Activated naive CD4-positive, alpha-beta T cell treated with anti-CD3 and anti-CD28 coated beads, Interleukin-2, amount 10 ng/mL, durations not matched to agents 7 days and 5 days (primary cell): ENCODE measurements at regions of chr10 and their contacts with region 1.

Region 1: DNA sequence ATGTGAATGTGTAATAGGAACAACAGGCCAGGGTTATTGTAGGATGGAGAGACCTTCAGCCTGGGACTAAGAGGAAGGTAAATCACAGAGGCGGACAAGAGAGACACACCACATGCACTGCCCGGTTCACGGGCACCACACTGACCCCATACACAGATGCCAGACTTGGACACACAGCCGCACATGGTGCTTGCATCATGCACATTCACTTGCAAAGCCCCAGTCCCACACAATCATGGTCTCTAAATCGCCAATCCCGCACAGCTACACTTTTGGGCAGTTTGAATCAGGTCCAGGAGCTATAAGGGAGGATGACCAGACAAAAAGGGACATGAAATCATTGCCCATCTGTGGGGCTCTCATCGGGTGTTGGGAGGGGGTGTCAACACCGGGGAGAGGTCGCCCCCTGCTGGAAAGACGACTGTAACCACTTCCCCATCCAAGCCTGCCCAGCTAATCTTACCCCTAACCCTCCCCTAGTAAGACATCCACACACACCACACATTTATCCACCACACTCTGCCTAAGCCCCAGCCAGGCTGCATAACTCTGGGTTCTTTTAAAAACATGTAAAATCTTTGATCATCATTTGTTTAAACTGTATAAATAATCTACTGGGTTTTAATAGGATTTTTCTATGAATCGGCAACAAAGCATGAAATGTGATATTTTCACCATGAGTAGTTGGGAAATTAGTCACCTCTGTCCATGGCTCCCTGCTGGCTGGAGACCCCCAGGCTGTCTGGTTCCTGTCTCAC is 40.5 kb upstream of the SLF2 start:
- DNase-seq: peak; percentile 72
- H3K4me3 Mint-ChIP-seq: no peak overlapping the region
- H3K27ac Mint-ChIP-seq: no peak overlapping the region
- H3K4me1 Mint-ChIP-seq: no peaks in the 10 kb centered on the region
- H3K27me3 Mint-ChIP-seq: peaks cover 41% of the 10 kb centered on the region

Region 2: DNA sequence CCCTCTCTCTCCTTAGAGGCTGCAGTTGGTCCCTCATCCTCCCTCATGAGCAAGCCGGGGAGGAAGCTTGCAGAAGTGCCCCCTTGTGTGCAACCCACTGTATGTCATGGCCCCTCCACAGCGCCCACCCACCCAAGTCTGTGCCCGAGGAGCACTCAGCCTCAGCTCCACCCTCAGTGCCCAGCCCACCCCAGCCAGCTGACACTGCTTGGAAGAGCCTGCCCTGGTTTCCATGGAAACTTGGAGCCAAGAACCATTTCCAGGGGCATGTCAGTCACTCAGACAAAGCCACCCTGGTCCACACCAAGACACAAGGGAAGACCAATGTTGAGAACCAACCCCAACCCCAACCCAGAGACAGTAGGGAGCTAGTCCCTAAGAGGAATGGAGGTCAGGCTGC is 47.3 kb before region 1 on chr10:
- CTCF ChIA-PET with region 1: interaction called, 12 read pairs
- DNase-seq: no peak
- H3K4me3 Mint-ChIP-seq: no peak overlapping the region
- H3K27ac Mint-ChIP-seq: no peak overlapping the region
- H3K4me1 Mint-ChIP-seq: peaks cover 20% of the 10 kb centered on the region
- H3K27me3 Mint-ChIP-seq: peaks cover 90% of the 10 kb centered on the region

Region 3: GRCh38 chr10:100888796-100889356 is 16.7 kb after region 1 on chr10:
- CTCF ChIA-PET with region 1: interaction called, 13 read pairs
- DNase-seq: no peak
- H3K4me3 Mint-ChIP-seq: no peak overlapping the region
- H3K27ac Mint-ChIP-seq: no peak overlapping the region
- H3K4me1 Mint-ChIP-seq: no peaks in the 10 kb centered on the region
- H3K27me3 Mint-ChIP-seq: peaks cover 54% of the 10 kb centered on the region

Region 4: GRCh38 chr10:100912605-100913469 is 40.6 kb after region 1 on chr10 and contains the start of gene SLF2:
- CTCF ChIA-PET with region 1: no interaction called
- DNase-seq: peak; percentile 96
- H3K4me3 Mint-ChIP-seq: peak within 1 kb of the TSS; percentile 98
- H3K27ac Mint-ChIP-seq: peak within 1 kb of the TSS; percentile 94
- H3K4me1 Mint-ChIP-seq: peaks cover 56% of the 10 kb centered on the region
- H3K27me3 Mint-ChIP-seq: peaks cover 4% of the 10 kb centered on the region

Region 5: GRCh38 chr10:101587725-101588653 is 715.8 kb after region 1 on chr10 and contains the starts of genes DPCD and POLL:
- CTCF ChIA-PET with region 1: no interaction called
- DNase-seq: peak; percentile 96
- H3K4me3 Mint-ChIP-seq: peak within 1 kb of the TSS; percentile 92
- H3K27ac Mint-ChIP-seq: peak within 1 kb of the TSS; percentile 86
- H3K4me1 Mint-ChIP-seq: peaks cover 28% of the 10 kb centered on the region
- H3K27me3 Mint-ChIP-seq: no peaks in the 10 kb centered on the region